Gastrocnemius medialis (tissue), 4 donors: ENCODE measurements at regions of chr17 and their contacts with region 1.

Region 1: DNA sequence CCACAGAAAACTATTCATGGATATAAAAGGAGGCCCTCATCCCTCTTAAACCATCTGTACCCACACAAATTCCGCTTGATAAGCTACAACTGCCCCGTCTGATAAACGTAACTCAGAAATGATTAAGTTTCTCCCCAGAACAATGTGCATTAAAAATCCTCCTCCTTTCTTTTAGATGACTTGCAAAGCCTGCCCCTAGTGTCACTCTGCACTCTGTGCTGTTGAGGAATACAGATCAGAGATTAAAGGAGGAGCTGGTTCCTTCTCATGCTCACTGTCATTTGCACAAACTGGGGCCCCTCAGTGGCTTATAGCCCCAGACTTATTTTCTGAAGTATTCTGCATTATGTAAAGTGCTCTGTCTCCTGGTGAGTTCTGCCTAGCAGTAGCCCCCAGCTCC is 33.3 kb downstream of the CDRT15 start:
- DNase-seq: no peak
- ATAC-seq: no peak
- H3K4me3 ChIP-seq: no peak overlapping the region
- H3K27ac ChIP-seq: peak overlapping the region; percentile 76 to 88 (median 84)
- H3K4me1 ChIP-seq: peaks cover 29 to 30% of the 10 kb centered on the region in 2 donors
- H3K27me3 ChIP-seq: no peaks in the 10 kb centered on the region
- CTCF ChIP-seq: no peak
- POLR2A ChIP-seq: no peak

Region 2: DNA sequence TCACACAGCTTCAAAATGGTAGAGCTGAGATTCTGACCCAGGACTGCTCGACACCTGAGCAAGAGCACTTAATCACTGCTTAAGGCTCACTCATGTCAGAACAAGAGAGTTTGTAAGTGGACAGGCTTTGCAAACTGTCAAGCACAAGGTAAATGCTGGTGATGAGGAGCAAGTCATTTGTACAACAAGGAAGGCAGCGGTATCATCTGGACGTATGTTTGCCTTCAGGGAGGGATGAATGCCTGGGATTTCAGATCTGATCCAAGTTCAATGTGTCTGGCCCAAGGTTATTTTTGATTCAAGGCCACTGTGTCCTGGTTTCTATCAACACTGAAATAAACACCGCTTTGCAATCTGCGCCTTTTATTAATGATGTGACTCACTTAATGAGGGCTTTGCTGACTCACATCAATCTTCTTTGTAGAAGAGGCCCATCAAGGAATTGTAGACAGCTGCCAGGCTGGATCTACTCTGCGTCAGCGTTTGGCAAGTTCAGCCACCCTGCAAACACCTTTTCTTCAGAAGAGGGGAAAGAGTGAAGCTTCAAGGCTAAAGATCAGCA is 427.3 kb before region 1 on chr17:
- in situ Hi-C with region 1: no loop called
- intact Hi-C with region 1: loop called (anchors 10 kb)
- DNase-seq: peak in 1 of 2 donors; percentile 46
- ATAC-seq: peak; percentile 85 to 91
- H3K4me3 ChIP-seq: no peak overlapping the region
- H3K27ac ChIP-seq: peak overlapping the region in 1 of 4 donors; percentile 52
- H3K4me1 ChIP-seq: no peaks in the 10 kb centered on the region
- H3K27me3 ChIP-seq: no peaks in the 10 kb centered on the region
- CTCF ChIP-seq: no peak
- POLR2A ChIP-seq: no peak

Region 3: DNA sequence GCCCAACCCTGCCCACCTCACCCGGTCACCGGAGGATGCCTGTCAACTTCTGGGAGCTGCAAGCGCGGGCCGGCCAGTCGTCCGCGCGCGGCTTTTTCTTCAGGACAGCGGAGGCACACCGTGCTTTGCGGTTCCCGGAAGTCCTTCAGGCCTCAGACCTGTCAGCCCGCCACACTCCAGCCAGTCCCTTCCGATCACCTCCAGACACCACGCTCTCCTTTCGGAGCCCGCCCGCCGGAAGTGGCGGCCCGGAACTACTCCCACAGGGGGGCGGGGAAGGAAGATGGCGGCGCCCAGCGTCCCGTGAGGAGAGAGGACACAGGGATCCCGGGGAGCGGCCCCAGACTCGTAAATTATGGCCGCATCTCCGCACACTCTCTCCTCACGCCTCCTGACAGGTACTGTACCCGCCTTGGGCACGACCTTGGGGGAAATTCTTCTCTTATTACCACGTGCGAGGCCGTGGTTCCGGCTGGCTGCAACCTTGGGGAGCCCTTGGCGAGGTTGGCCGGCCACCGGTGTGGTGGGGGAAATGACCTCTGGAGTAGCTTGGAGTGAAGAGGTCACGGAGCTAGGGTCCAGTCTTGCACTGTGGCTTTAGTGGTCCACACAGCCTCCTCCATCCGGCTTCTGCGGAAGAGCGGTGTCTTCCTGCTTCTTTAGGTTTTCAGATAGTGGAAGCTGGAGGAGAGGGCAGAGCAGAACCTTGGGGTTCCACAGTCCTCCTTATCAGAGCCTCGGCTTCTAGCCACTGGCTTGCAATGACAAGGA is 134.0 kb before region 1 on chr17 and contains the start of gene COX10:
- in situ Hi-C with region 1: no loop called
- intact Hi-C with region 1: loop called (anchors 5 kb)
- DNase-seq: peak; percentile 80 to 84
- ATAC-seq: peak; percentile 97 to 98
- H3K4me3 ChIP-seq: peak within 1 kb of the TSS; percentile 92 to 99 (median 97)
- H3K27ac ChIP-seq: peak within 1 kb of the TSS; percentile 89 to 98 (median 95)
- H3K4me1 ChIP-seq: peaks cover 21 to 23% of the 10 kb centered on the region in 2 donors
- H3K27me3 ChIP-seq: no peaks in the 10 kb centered on the region
- CTCF ChIP-seq: no peak
- POLR2A ChIP-seq: peak; percentile 84 to 88
- total RNA-seq, gene COX10: 70.6 to 123 (median 87.3) TPM

Region 4: DNA sequence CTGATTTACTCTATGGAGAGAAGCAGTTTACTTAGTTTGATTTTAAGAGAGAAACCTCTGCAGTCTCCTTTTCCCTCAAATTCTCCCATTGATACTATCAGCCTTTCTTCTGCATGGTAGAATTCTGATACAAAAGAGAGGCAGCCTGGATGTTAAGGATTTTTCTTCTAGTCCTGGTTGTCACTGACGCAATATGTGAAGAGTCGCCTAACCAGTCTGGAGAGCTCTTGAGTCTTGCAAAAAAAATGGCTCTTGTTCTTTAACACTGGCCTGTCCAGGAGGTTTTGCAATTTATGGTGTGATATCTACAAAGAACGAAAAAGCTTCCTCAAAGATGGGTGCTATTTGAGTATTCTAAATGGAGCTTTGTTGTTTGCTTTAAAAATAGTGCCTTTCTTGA is 105.2 kb before region 1 on chr17:
- in situ Hi-C with region 1: no loop called
- intact Hi-C with region 1: no loop called
- DNase-seq: no peak
- ATAC-seq: no peak
- H3K4me3 ChIP-seq: no peak overlapping the region
- H3K27ac ChIP-seq: no peak overlapping the region
- H3K4me1 ChIP-seq: peaks cover 9 to 11% of the 10 kb centered on the region in 2 donors
- H3K27me3 ChIP-seq: no peaks in the 10 kb centered on the region
- CTCF ChIP-seq: no peak
- POLR2A ChIP-seq: no peak

Region 5: GRCh38 chr17:14118951-14119350 is 84.4 kb before region 1 on chr17:
- in situ Hi-C with region 1: no loop called
- intact Hi-C with region 1: loop called (anchors 2 kb)
- DNase-seq: no peak
- ATAC-seq: no peak
- H3K4me3 ChIP-seq: no peak overlapping the region
- H3K27ac ChIP-seq: no peak overlapping the region
- H3K4me1 ChIP-seq: peaks cover 12 to 17% of the 10 kb centered on the region in 2 donors
- H3K27me3 ChIP-seq: no peaks in the 10 kb centered on the region
- CTCF ChIP-seq: no peak
- POLR2A ChIP-seq: no peak

Region 6: DNA sequence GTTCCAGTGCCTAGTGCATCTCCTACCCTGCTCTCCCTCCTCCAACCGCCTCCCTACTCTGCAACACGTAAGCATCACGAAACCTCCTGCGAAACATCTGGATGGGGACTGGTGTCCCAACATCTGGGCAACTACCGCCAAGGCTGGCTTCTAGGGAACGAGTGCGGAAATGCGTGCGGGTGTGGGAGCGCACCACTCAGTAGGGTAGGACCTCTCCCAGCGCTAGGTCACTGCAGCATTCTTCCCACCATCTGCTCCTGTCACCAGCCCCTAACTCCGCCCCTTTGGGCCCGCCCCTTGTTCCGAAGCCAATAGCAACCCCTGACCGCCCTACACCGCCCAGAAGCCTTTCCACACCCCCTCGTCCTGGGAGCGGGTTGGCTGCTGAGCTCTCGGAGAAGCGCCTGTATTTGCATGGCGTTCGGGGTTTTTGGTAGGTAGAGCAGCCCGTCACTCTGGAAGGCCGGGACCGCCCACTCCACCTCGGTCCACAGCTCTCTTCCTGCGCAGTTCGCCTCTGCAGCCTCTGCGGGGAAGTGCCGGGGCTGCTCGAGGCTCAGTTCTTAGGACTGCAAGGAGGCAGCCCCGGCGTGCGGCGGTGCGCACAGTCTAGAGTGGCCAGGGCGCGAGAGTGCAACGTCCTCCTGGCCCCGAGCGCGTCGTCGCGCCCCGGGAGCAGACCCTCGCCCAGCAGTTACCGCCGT is 97.3 kb after region 1 on chr17 and contains the start of gene HS3ST3B1:
- in situ Hi-C with region 1: no loop called
- intact Hi-C with region 1: loop called (anchors 2 kb)
- DNase-seq: peak; percentile 96 to 98
- ATAC-seq: peak; percentile 90 to 95
- H3K4me3 ChIP-seq: peak within 1 kb of the TSS; percentile 57 to 74 (median 70)
- H3K27ac ChIP-seq: peak within 1 kb of the TSS; percentile 64 to 80 (median 70)
- H3K4me1 ChIP-seq: peaks cover 35 to 44% of the 10 kb centered on the region in 2 donors
- H3K27me3 ChIP-seq: peaks cover 60 to 89% (median 85%) of the 10 kb centered on the region in 3 donors
- CTCF ChIP-seq: peak in 1 of 5 experiments; percentile 14
- POLR2A ChIP-seq: peak; percentile 77 to 86
- total RNA-seq, gene HS3ST3B1: 0.10 to 4.0 (median 0.82) TPM

Region 7: GRCh38 chr17:15409721-15410250 is 1206.4 kb after region 1 on chr17:
- in situ Hi-C with region 1: no loop called
- intact Hi-C with region 1: loop called (anchors 10 kb)
- DNase-seq: peak; percentile 38 to 46
- ATAC-seq: peak; percentile 32 to 47
- H3K4me3 ChIP-seq: peak overlapping the region in 1 of 4 donors; percentile 18
- H3K27ac ChIP-seq: peak overlapping the region; percentile 70 to 89 (median 78)
- H3K4me1 ChIP-seq: peaks cover 14 to 27% of the 10 kb centered on the region in 2 donors
- H3K27me3 ChIP-seq: no peaks in the 10 kb centered on the region
- CTCF ChIP-seq: no peak
- POLR2A ChIP-seq: peak in 1 of 2 donors; percentile 42

Region 8: GRCh38 chr17:15490634-15491261 is 1287.4 kb after region 1 on chr17:
- in situ Hi-C with region 1: no loop called
- intact Hi-C with region 1: loop called (anchors 10 kb)
- DNase-seq: peak; percentile 70 to 80
- ATAC-seq: peak; percentile 79 to 92
- H3K4me3 ChIP-seq: no peak overlapping the region
- H3K27ac ChIP-seq: peak overlapping the region; percentile 63 to 78 (median 71)
- H3K4me1 ChIP-seq: peaks cover 9 to 19% of the 10 kb centered on the region in 2 donors
- H3K27me3 ChIP-seq: no peaks in the 10 kb centered on the region
- CTCF ChIP-seq: no peak
- POLR2A ChIP-seq: no peak